Activated CD8-positive, alpha-beta T cell treated with anti-CD3 and anti-CD28 coated beads, Interleukin-2, amount 10 ng/mL, durations not matched to agents 7 days and 5 days (primary cell): ENCODE measurements at regions of chr1 and their contacts with region 1.

Region 1: DNA sequence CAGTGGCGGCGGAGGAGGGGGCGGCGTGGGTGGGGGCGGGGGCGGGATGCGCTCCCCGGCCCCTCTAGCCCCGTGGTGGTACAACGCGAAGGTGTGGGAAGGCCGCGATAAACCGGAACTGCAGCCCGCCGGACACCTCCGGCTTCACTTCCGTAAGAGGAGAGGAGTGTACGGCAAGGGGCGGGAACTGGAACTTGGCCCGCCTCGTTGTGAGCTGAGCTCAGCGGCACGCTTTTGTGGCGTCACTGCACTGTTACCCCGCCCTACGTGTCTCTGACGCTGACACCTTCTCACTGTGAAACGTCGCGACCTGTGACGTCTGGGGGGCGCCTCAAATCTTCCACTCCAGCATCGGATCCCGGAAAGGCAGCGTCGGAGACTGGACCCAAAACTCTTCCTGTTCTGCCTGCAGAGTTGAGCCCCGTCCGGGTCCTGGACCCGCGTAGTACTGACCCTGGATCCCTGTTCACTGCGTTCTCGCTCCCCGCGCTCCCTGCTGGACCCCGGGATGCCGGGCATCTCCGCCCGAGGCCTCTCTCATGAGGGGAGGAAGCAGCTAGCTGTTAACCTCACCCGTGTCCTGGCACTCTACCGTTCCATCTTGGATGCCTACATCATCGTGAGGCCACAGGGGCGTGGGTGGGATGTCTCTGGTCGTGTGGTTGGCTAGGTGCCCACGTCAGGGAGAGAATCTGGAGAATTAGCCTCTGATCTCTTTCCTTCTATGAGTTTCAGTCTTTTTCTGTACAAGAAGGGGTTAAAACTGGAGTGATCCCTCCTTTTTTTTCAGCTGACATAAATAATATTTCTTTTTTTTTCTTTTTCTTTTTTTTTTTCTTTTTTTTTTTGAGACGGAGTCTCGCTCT is at the start of gene ISG20L2:
- DNase-seq: peak; percentile 99
- ATAC-seq: peak; percentile 90
- H3K4me3 Mint-ChIP-seq: no peak within 1 kb of the TSS
- H3K27ac Mint-ChIP-seq: no peak within 1 kb of the TSS
- H3K4me1 Mint-ChIP-seq: peaks cover 29% of the 10 kb centered on the region
- H3K27me3 Mint-ChIP-seq: no peaks in the 10 kb centered on the region
- total RNA-seq, gene ISG20L2: 56.3 to 58.8 TPM

Region 2: GRCh38 chr1:156379420-156380165 is 349.2 kb before region 1 on chr1:
- CTCF ChIA-PET with region 1: no interaction called
- POLR2A ChIA-PET with region 1: no interaction called
- DNase-seq: no peak
- ATAC-seq: no peak
- H3K4me3 Mint-ChIP-seq: no peak overlapping the region
- H3K27ac Mint-ChIP-seq: no peak overlapping the region
- H3K4me1 Mint-ChIP-seq: peaks cover under 1% of the 10 kb centered on the region
- H3K27me3 Mint-ChIP-seq: peaks cover 5% of the 10 kb centered on the region

Region 3: DNA sequence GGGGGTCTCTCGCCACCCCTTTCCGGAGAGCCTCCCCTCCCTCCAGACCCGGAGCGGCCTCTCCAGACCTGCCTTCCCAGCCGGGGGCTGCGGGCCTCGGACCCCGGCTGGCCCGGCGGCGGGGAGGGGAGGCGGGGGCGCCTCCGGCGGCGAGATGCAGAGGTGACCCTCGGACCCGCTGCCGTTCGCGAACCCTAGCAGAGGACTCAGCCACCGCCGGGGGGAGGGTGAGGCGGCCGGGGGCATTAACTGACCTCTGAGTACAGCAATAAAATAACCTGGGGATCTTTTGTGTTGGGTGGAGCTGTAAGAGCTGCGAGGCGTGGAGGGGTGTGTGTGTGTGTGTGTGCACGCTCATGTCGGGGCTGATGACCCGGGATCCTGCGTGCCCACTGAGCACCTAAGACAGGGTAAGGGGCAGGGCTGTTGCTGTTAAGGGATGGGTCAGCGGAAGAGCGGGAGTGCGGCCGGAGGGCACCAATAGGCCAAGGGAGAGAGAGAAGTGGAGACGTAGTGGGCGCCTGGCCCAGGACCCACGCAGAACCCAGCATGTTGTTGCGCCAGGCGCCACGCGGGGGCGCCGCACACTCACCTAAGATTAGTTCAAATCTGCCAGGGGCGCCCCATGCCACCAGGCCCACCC is 103.3 kb before region 1 on chr1:
- CTCF ChIA-PET with region 1: interaction called, 18 read pairs
- POLR2A ChIA-PET with region 1: no interaction called
- DNase-seq: peak; percentile 70
- ATAC-seq: peak; percentile 57
- H3K4me3 Mint-ChIP-seq: peak overlapping the region; percentile 40
- H3K27ac Mint-ChIP-seq: no peak overlapping the region
- H3K4me1 Mint-ChIP-seq: peaks cover 12% of the 10 kb centered on the region
- H3K27me3 Mint-ChIP-seq: peaks cover 47% of the 10 kb centered on the region

Region 4: DNA sequence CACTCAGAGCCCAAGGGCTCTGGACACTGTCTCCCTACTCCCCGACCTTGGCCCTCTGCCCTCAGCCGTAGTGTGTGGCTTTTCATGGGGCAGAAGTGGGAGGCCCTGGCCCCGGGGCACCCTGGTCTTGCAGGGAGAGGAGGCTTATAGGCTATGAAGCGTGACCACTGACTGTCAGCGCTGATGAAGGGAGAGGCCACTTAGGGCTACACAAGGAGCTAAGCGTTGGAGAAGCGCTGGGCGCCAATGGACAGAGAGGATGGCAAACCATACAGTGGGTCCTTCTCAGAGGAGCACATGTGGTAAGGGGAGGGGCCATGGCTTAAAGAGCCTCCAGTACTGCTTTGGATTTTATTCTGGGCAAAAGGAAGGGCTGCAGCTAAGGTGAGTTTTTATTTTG is 31.3 kb before region 1 on chr1:
- CTCF ChIA-PET with region 1: interaction called, 543 read pairs
- POLR2A ChIA-PET with region 1: interaction called, 3 read pairs
- DNase-seq: no peak
- ATAC-seq: no peak
- H3K4me3 Mint-ChIP-seq: no peak overlapping the region
- H3K27ac Mint-ChIP-seq: no peak overlapping the region
- H3K4me1 Mint-ChIP-seq: peaks cover 24% of the 10 kb centered on the region
- H3K27me3 Mint-ChIP-seq: peaks cover 21% of the 10 kb centered on the region

Region 5: DNA sequence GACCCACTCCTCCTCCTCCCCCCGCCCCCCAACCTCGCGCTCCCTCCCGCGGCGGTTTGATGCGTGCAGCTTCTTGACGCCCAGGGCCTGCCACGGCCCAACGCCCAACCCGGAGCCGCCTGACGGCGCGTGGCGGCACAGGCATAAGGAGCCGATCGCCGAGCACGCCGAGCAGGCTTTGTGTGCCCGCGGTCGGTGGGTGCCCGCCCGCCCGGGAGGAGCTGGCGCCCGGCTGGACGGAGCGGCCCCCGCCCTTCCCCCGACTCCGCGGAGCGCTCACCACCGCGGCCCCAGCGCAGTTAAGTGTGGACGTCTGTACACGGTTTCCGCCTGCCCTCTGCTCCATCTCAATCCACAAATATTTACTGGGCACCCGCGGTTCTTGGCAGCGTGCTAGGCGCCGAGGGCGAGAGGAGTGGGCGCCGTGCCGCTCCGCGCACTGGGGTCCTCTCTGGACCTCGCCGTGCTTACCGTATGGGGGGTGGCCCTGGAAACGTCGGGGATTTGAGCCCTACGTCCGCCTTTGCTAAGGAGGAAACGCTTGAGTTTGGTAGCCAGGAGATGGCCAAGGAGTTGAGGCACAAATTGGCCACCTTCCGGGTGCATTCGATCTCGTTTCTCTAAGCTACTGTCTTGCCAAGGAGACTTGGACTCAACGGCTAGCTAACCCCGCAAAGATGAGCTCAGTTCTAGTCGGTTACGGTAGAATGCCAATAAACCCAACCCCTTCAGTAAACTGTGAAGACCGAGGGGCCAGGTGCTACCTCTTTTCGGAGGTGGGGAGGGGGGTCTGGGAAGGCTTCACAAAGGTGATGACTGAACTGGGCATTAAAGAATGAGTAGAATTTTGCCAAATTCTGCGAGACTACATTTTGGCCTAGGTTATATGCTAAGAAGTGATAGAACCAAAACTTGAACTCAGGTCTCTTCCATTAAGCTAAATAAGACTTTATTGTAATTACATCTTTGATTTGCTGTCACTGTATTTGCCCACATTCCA is 23.2 kb after region 1 on chr1:
- CTCF ChIA-PET with region 1: interaction called, 90 read pairs
- POLR2A ChIA-PET with region 1: interaction called, 61 read pairs
- DNase-seq: peak; percentile 98
- ATAC-seq: peak; percentile 83
- H3K4me3 Mint-ChIP-seq: peak overlapping the region; percentile 96
- H3K27ac Mint-ChIP-seq: peak overlapping the region; percentile 96
- H3K4me1 Mint-ChIP-seq: peaks cover 37% of the 10 kb centered on the region
- H3K27me3 Mint-ChIP-seq: no peaks in the 10 kb centered on the region

Region 6: GRCh38 chr1:156804572-156805243 is 75.9 kb after region 1 on chr1:
- CTCF ChIA-PET with region 1: interaction called, 24 read pairs
- POLR2A ChIA-PET with region 1: no interaction called
- DNase-seq: no peak
- ATAC-seq: no peak
- H3K4me3 Mint-ChIP-seq: no peak overlapping the region
- H3K27ac Mint-ChIP-seq: peak overlapping the region; percentile 73
- H3K4me1 Mint-ChIP-seq: peaks cover 55% of the 10 kb centered on the region
- H3K27me3 Mint-ChIP-seq: no peaks in the 10 kb centered on the region

Region 7: DNA sequence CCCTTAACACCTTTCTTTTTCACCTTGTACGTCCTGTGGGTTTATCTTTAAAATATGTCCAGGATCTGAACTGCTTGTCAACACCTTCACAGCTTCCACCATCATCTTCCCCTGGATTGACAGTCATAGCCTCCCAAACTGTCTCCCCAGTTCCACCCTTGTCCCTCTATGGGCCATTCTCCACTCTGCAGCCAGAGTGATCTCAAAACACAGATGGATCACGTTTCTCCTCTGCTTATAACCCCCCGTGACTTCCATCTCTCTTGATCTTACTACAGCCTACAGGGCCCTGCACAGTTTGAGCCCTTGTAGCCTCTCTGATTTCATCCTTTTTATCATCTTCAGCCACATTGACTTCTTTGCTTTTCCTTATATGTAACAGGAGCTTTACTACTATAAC is 125.8 kb after region 1 on chr1:
- CTCF ChIA-PET with region 1: interaction called, 203 read pairs
- POLR2A ChIA-PET with region 1: interaction called, 22 read pairs
- DNase-seq: no peak
- ATAC-seq: no peak
- H3K4me3 Mint-ChIP-seq: no peak overlapping the region
- H3K27ac Mint-ChIP-seq: no peak overlapping the region
- H3K4me1 Mint-ChIP-seq: peaks cover 14% of the 10 kb centered on the region
- H3K27me3 Mint-ChIP-seq: peaks cover 33% of the 10 kb centered on the region

Region 8: GRCh38 chr1:157269656-157270375 is 541.0 kb after region 1 on chr1:
- CTCF ChIA-PET with region 1: no interaction called
- POLR2A ChIA-PET with region 1: no interaction called
- DNase-seq: no peak
- ATAC-seq: no peak
- H3K4me3 Mint-ChIP-seq: no peak overlapping the region
- H3K27ac Mint-ChIP-seq: no peak overlapping the region
- H3K4me1 Mint-ChIP-seq: no peaks in the 10 kb centered on the region
- H3K27me3 Mint-ChIP-seq: peaks cover 5% of the 10 kb centered on the region